ENCODE measurements at regions of chr10 and their contacts with region 1.

Region 1: DNA sequence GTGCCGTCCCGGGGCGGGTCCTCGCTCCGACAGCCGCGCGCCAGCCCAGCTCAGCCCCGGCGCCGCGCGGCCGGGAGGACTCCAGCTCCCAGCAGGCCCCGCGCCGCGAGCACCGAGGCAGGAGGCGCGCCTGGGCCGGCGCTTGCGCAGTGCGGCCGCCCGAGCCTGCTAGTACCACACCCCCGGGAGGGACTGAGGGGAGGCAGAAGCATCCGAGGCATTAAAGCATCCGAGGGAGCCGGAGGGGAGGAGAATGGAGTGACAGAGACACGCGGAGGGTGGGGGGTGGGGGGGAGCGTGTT is at the start of gene GRK5:
- DNase-seq: peak; percentile 87 to 92
- ATAC-seq: peak; percentile 83
- H3K4me3 ChIP-seq: peak within 1 kb of the TSS; percentile 66 to 86 (median 76)
- H3K27ac ChIP-seq: peak within 1 kb of the TSS; percentile 87 to 98 (median 92)
- H3K4me1 ChIP-seq: peaks cover 7 to 14% of the 10 kb centered on the region in 2 donors
- H3K27me3 ChIP-seq: no peaks in the 10 kb centered on the region
- CTCF ChIP-seq: no peak
- POLR2A ChIP-seq: peak; percentile 66 to 78
- total RNA-seq, gene GRK5: 6.2 to 12.5 (median 9.1) TPM

Region 2: GRCh38 chr10:119178372-119179119 is 28.8 kb before region 1 on chr10 and contains the start of gene PRDX3:
- in situ Hi-C with region 1: no loop called
- intact Hi-C with region 1: loop called (anchors 1 kb)
- DNase-seq: peak; percentile 83 to 90
- ATAC-seq: peak; percentile 96 to 97
- H3K4me3 ChIP-seq: peak within 1 kb of the TSS; percentile 74 to 91 (median 87)
- H3K27ac ChIP-seq: peak within 1 kb of the TSS; percentile 90 to 97 (median 94)
- H3K4me1 ChIP-seq: peaks cover 18 to 24% of the 10 kb centered on the region in 2 donors
- H3K27me3 ChIP-seq: no peaks in the 10 kb centered on the region
- CTCF ChIP-seq: peak in 3 of 5 experiments; percentile 36 to 56 (median 50)
- POLR2A ChIP-seq: peak; percentile 65 to 79
- total RNA-seq, gene PRDX3: 227 to 342 (median 250) TPM

Region 3: GRCh38 chr10:119281581-119282071 is 74.3 kb after region 1 on chr10:
- in situ Hi-C with region 1: no loop called
- intact Hi-C with region 1: loop called (anchors 5 kb)
- DNase-seq: peak; percentile 50 to 84
- ATAC-seq: peak; percentile 41 to 50
- H3K4me3 ChIP-seq: no peak overlapping the region
- H3K27ac ChIP-seq: peak overlapping the region; percentile 67 to 85 (median 70)
- H3K4me1 ChIP-seq: peaks cover 59 to 76% of the 10 kb centered on the region in 2 donors
- H3K27me3 ChIP-seq: no peaks in the 10 kb centered on the region
- CTCF ChIP-seq: no peak
- POLR2A ChIP-seq: no peak

Region 4: GRCh38 chr10:119315128-119316001 is 108.0 kb after region 1 on chr10:
- in situ Hi-C with region 1: no loop called
- intact Hi-C with region 1: loop called (anchors 5 kb)
- DNase-seq: peak; percentile 68 to 83
- ATAC-seq: peak; percentile 97 to 98
- H3K4me3 ChIP-seq: no peak overlapping the region
- H3K27ac ChIP-seq: peak overlapping the region; percentile 71 to 75 (median 72)
- H3K4me1 ChIP-seq: peaks cover 20 to 26% of the 10 kb centered on the region in 2 donors
- H3K27me3 ChIP-seq: no peaks in the 10 kb centered on the region
- CTCF ChIP-seq: no peak
- POLR2A ChIP-seq: no peak

Region 5: GRCh38 chr10:119416855-119417254 is 209.5 kb after region 1 on chr10:
- in situ Hi-C with region 1: loop called in 3 of 4 experiments (anchors 5 to 10 kb)
- intact Hi-C with region 1: loop called (anchors 1 kb)
- DNase-seq: peak in 1 of 2 donors; percentile 54
- ATAC-seq: peak in 1 of 2 donors; percentile 52
- H3K4me3 ChIP-seq: no peak overlapping the region
- H3K27ac ChIP-seq: peak overlapping the region in 1 of 4 donors; percentile 44
- H3K4me1 ChIP-seq: peaks cover 19 to 22% of the 10 kb centered on the region in 2 donors
- H3K27me3 ChIP-seq: no peaks in the 10 kb centered on the region
- CTCF ChIP-seq: peak; percentile 51 to 75 (median 70)
- POLR2A ChIP-seq: no peak

Region 6: DNA sequence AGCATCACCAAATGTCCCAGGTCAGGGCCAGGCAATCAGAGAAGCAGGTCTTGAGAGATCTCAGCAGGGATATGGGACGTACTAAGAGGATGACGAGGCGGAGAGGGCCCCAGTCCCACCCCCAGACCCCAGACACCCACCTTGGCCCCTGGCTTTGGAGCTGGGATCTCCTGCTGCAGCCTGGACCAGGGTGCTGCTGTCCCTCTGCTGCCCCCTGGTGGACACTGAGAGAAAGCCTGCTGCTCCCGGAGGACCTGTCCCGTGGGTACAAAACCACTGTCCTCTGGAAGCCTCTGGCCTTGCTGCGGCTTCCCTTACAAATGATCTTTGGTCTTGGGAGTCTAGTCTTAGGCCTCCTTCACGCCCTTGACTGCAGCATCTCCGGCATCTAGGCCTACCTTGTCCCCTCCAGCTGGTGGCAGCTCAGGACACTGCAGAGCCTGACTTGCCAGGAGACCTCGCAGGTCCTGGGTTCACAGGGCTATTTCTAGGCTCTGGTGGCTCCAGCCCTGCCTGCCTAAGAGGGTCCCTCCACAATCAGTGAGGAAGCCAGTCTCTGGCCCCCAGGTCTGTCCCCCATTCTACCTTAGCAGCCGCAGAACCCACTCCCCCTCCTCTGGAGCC is 238.1 kb after region 1 on chr10:
- in situ Hi-C with region 1: loop called in 2 of 4 experiments (anchors 5 kb)
- intact Hi-C with region 1: loop called (anchors 2 kb)
- DNase-seq: peak; percentile 68 to 72
- ATAC-seq: peak; percentile 61 to 78
- H3K4me3 ChIP-seq: no peak overlapping the region
- H3K27ac ChIP-seq: no peak overlapping the region
- H3K4me1 ChIP-seq: peaks cover 4 to 9% of the 10 kb centered on the region in 2 donors
- H3K27me3 ChIP-seq: no peaks in the 10 kb centered on the region
- CTCF ChIP-seq: peak; percentile 76 to 98 (median 93)
- POLR2A ChIP-seq: no peak